H1 (cell line): ENCODE measurements at regions of chr11 and their contacts with region 1.

Region 1: DNA sequence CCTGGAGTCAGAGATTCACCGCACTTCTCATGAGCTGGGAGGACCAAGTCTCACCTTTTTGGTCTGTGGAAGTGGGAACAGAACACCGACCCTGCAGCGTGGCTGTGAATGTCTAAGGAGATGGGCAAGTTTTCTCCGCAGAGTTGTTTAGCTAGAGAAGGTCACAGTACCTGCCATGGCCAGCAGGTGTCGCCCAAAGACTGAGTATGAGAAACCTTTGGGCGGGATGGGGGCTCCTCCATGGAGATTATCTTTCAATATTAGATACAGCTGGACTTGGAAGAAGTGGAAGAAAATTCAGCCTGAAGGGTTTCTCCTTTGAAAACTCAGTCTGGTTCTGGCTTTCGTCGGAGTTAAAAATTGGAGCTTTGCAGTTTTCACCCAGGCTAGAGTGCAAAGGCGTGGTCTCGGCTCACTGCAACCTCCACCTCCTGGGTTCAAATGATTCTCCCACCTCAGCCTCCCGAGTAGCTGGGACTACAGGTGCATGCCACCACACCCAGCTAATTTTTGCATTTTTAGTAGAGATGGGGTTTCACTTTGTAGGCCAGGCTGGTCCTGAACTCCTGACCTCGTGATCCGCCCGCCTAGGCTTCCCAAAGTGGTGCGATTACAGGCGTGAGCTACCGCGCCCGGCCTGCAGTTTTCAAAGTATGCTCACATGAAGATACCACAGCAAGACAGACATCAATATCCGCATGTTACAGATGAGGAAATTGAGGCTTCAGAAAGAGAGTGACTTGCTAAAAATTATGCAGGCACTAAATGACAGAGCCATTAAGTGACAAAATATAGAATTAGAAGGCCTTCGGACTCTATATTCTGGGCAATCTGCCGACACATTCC is 10.7 kb upstream of the DSCAML1 start:
- DNase-seq: peak in 1 of 2 experiments; percentile 92
- H3K4me3 ChIP-seq: no peak overlapping the region
- H3K27ac ChIP-seq: no peak overlapping the region
- H3K4me1 ChIP-seq: no peaks in the 10 kb centered on the region; a peak in 1 of 7 replicates
- H3K27me3 ChIP-seq: no peaks in the 10 kb centered on the region; a peak in 1 of 7 replicates
- CTCF ChIP-seq: peak; percentile 69 to 83 (median 76)
- EP300 ChIP-seq: no peak
- POLR2A ChIP-seq: no peak
- RAD21 ChIP-seq: peak; percentile 89 to 91

Region 2: GRCh38 chr11:117410861-117411710 is 396.6 kb before region 1 on chr11:
- CTCF ChIA-PET with region 1: interaction called, 10 read pairs
- POLR2A ChIA-PET with region 1: no interaction called
- DNase-seq: no peak
- H3K4me3 ChIP-seq: no peak overlapping the region
- H3K27ac ChIP-seq: no peak overlapping the region
- H3K4me1 ChIP-seq: peaks cover 0 to 4% (median 0%) of the 10 kb centered on the region in 4 experiments; a peak in 2 of 7 replicates
- H3K27me3 ChIP-seq: no peaks in the 10 kb centered on the region
- CTCF ChIP-seq: no peak
- EP300 ChIP-seq: no peak
- POLR2A ChIP-seq: no peak
- RAD21 ChIP-seq: no peak

Region 3: DNA sequence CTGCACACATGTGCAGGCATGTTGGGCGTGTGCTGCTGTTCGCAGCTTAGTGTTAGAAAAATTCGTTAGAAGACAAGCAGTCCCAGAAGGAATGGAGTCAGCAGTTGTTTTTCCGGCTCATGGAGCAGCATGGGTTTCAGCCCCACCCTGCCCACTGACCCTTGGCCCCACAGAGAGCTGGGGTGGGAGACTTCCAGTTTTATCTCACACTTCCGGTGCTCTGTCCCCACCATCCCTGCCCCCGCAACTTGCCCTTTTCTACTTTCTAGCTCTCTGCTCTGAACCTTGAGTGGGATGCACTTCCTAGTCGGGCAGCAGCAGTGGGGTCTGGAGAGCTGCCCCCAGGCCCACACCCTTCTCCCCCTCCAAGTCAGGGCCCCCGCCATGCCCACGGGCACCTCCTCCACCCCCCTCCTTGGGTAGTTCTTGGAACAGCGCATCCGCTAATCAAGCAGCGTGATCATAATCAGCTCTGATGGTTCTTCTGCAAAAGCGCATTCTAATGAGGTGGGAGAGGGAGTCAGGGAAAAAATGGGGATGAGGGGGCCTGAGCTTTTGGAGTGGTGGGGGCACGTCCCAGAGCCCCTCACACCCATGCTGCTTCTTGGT is 295.7 kb before region 1 on chr11:
- CTCF ChIA-PET with region 1: interaction called, 10 read pairs
- POLR2A ChIA-PET with region 1: no interaction called
- DNase-seq: no peak
- H3K4me3 ChIP-seq: no peak overlapping the region
- H3K27ac ChIP-seq: no peak overlapping the region
- H3K4me1 ChIP-seq: peaks cover 7 to 23% (median 14%) of the 10 kb centered on the region in 4 experiments
- H3K27me3 ChIP-seq: no peaks in the 10 kb centered on the region
- CTCF ChIP-seq: no peak
- EP300 ChIP-seq: no peak
- POLR2A ChIP-seq: no peak
- RAD21 ChIP-seq: no peak

Region 4: GRCh38 chr11:117649296-117650055 is 158.2 kb before region 1 on chr11:
- CTCF ChIA-PET with region 1: interaction called, 16 read pairs
- POLR2A ChIA-PET with region 1: no interaction called
- DNase-seq: no peak
- H3K4me3 ChIP-seq: no peak overlapping the region
- H3K27ac ChIP-seq: no peak overlapping the region
- H3K4me1 ChIP-seq: no peaks in the 10 kb centered on the region
- H3K27me3 ChIP-seq: no peaks in the 10 kb centered on the region; a peak in 1 of 7 replicates
- CTCF ChIP-seq: no peak
- EP300 ChIP-seq: no peak
- POLR2A ChIP-seq: no peak
- RAD21 ChIP-seq: no peak

Region 5: GRCh38 chr11:117796872-117797529 is 10.7 kb before region 1 on chr11 and contains the start of gene DSCAML1:
- CTCF ChIA-PET with region 1: interaction called, 39 read pairs
- POLR2A ChIA-PET with region 1: no interaction called
- DNase-seq: peak in 1 of 2 experiments; percentile 77
- H3K4me3 ChIP-seq: peak within 1 kb of the TSS; percentile 23 to 72 (median 54)
- H3K27ac ChIP-seq: no peak within 1 kb of the TSS
- H3K4me1 ChIP-seq: peaks cover 0 to 13% (median 6%) of the 10 kb centered on the region in 4 experiments; a peak in 5 of 7 replicates
- H3K27me3 ChIP-seq: peaks cover 27 to 66% (median 58%) of the 10 kb centered on the region in 4 experiments
- CTCF ChIP-seq: no peak
- EP300 ChIP-seq: no peak
- POLR2A ChIP-seq: no peak
- RAD21 ChIP-seq: no peak
- total RNA-seq, gene DSCAML1: 0.19 and 0.27 TPM in 2 replicates

Region 6: GRCh38 chr11:117946842-117947526 is 139.3 kb after region 1 on chr11:
- CTCF ChIA-PET with region 1: interaction called, 45 read pairs
- POLR2A ChIA-PET with region 1: no interaction called
- DNase-seq: peak; percentile 81 to 99
- H3K4me3 ChIP-seq: no peak overlapping the region
- H3K27ac ChIP-seq: no peak overlapping the region
- H3K4me1 ChIP-seq: 0 out of 7 replicates have a peak, but pooled peaks cover 0 to 2% (median 0%) of the 10 kb centered on the region in 4 experiments
- H3K27me3 ChIP-seq: no peaks in the 10 kb centered on the region
- CTCF ChIP-seq: peak; percentile 87 to 98 (median 98)
- EP300 ChIP-seq: 0 out of 3 replicates have a peak, but pooled peaks of 1 of the 2 experiments have one; percentile 9
- POLR2A ChIP-seq: no peak
- RAD21 ChIP-seq: peak; percentile 98 to 99

Region 7: GRCh38 chr11:118051611-118052461 is 244.1 kb after region 1 on chr11:
- CTCF ChIA-PET with region 1: interaction called, 45 read pairs
- POLR2A ChIA-PET with region 1: no interaction called
- DNase-seq: no peak
- H3K4me3 ChIP-seq: no peak overlapping the region
- H3K27ac ChIP-seq: no peak overlapping the region
- H3K4me1 ChIP-seq: no peaks in the 10 kb centered on the region; a peak in 1 of 7 replicates
- H3K27me3 ChIP-seq: no peaks in the 10 kb centered on the region
- CTCF ChIP-seq: no peak
- EP300 ChIP-seq: no peak
- POLR2A ChIP-seq: no peak
- RAD21 ChIP-seq: no peak

Region 8: DNA sequence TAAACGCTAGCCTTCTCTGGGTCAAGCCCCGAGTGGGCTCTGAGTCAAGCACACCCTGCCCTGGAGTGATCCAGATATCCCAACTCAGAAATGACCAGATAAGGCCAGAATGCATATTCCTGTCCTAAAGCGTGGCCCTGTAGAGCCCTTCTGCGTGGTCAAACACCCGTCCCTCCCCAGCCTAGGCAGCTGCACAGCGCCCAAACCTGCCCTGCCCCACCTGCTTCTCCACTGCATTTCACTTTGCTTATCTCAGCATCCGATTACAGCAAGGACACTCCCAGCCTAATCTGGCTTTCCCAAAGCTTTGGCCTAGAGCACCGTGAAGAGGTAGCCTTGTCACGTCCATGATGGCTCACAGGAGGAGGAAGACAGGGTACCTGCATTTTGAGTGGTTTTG is 257.3 kb after region 1 on chr11:
- CTCF ChIA-PET with region 1: no interaction called
- POLR2A ChIA-PET with region 1: no interaction called
- DNase-seq: no peak
- H3K4me3 ChIP-seq: no peak overlapping the region
- H3K27ac ChIP-seq: no peak overlapping the region
- H3K4me1 ChIP-seq: no peaks in the 10 kb centered on the region
- H3K27me3 ChIP-seq: no peaks in the 10 kb centered on the region
- CTCF ChIP-seq: no peak
- EP300 ChIP-seq: no peak
- POLR2A ChIP-seq: no peak
- RAD21 ChIP-seq: no peak